B cell (primary cell): ENCODE measurements at regions of chr11 and their contacts with region 1.

Region 1: GRCh38 chr11:66677599-66678375 is at the start of gene RBM4B:
- DNase-seq: peak; percentile 99
- ATAC-seq: peak; percentile 91
- H3K4me3 ChIP-seq: peak within 1 kb of the TSS; percentile 86 to 95 (median 89)
- H3K4me3 Mint-ChIP-seq: peak within 1 kb of the TSS; percentile 99
- H3K27ac ChIP-seq: peak within 1 kb of the TSS; percentile 91 to 99
- H3K27ac Mint-ChIP-seq: peak within 1 kb of the TSS; percentile 99
- H3K4me1 ChIP-seq: peaks cover 24 to 35% of the 10 kb centered on the region in 2 donors
- H3K4me1 Mint-ChIP-seq: peaks cover 33% of the 10 kb centered on the region
- H3K27me3 ChIP-seq: no peaks in the 10 kb centered on the region
- H3K27me3 Mint-ChIP-seq: no peaks in the 10 kb centered on the region
- CTCF ChIP-seq: no peak
- total RNA-seq, gene RBM4B: 61.3 and 66.4 TPM in 2 replicates

Region 2: DNA sequence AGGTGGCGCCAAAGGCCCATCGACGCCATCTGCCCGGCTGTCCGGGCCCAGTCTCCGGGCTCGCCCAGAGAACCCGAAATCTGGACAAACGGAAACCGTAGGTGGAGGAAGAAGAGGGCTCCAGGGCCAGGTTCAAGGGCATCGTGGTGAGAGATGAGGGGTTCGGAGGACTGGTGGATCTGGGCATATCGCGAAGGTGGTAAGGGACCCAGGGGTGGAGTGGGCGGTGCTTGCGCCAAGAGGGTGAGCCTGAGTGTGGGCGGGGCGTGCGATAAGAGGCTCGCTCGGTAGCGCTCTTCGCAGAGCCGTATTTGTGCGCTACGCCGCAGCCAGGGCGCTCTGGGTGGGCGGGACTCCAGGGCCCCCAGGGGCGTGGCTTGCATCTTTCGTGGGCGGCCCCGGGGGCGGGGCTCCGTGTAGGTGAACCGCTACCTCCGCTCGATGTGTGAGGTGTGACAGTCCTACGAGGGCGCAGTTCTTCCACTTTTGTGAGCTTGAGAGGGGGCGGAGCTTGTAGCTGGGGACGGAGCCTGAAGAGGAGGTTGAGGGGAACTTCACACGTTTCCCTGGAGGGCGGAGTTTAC is 365.7 kb before region 1 on chr11:
- CTCF ChIA-PET with region 1: interaction called, 5 read pairs
- POLR2A ChIA-PET with region 1: no interaction called
- intact Hi-C with region 1: loop called (anchors 2 kb)
- DNase-seq: peak; percentile 100
- ATAC-seq: peak; percentile 79
- H3K4me3 ChIP-seq: peak overlapping the region; percentile 30 to 72 (median 63)
- H3K4me3 Mint-ChIP-seq: peak overlapping the region; percentile 99
- H3K27ac ChIP-seq: peak overlapping the region; percentile 74 to 88
- H3K27ac Mint-ChIP-seq: peak overlapping the region; percentile 99
- H3K4me1 ChIP-seq: peaks cover 11 to 21% of the 10 kb centered on the region in 2 donors
- H3K4me1 Mint-ChIP-seq: peaks cover 28% of the 10 kb centered on the region
- H3K27me3 ChIP-seq: no peaks in the 10 kb centered on the region
- H3K27me3 Mint-ChIP-seq: peaks cover 3% of the 10 kb centered on the region
- CTCF ChIP-seq: peak; percentile 99

Region 3: GRCh38 chr11:66438504-66439466 is 239.0 kb before region 1 on chr11 and contains the start of gene MRPL11:
- CTCF ChIA-PET with region 1: interaction called, 32 read pairs
- POLR2A ChIA-PET with region 1: interaction called, 5 read pairs
- intact Hi-C with region 1: loop called (anchors 1 kb)
- DNase-seq: peak; percentile 95
- ATAC-seq: peak; percentile 98
- H3K4me3 ChIP-seq: peak within 1 kb of the TSS; percentile 71 to 98 (median 78)
- H3K4me3 Mint-ChIP-seq: peak within 1 kb of the TSS; percentile 93
- H3K27ac ChIP-seq: peak within 1 kb of the TSS; percentile 76 to 79
- H3K27ac Mint-ChIP-seq: peak within 1 kb of the TSS; percentile 98
- H3K4me1 ChIP-seq: peaks cover 6 to 10% of the 10 kb centered on the region in 2 donors
- H3K4me1 Mint-ChIP-seq: peaks cover 14% of the 10 kb centered on the region
- H3K27me3 ChIP-seq: no peaks in the 10 kb centered on the region
- H3K27me3 Mint-ChIP-seq: no peaks in the 10 kb centered on the region
- CTCF ChIP-seq: peak; percentile 77
- total RNA-seq, gene MRPL11: 26.7 and 29.2 TPM in 2 replicates

Region 4: GRCh38 chr11:66545701-66546367 is 132.0 kb before region 1 on chr11 and contains the start of gene ZDHHC24:
- CTCF ChIA-PET with region 1: interaction called, 58 read pairs
- POLR2A ChIA-PET with region 1: interaction called, 17 read pairs
- intact Hi-C with region 1: loop called (anchors 1 kb)
- DNase-seq: peak; percentile 91
- ATAC-seq: peak; percentile 82
- H3K4me3 ChIP-seq: peak within 1 kb of the TSS; percentile 74 to 89 (median 83)
- H3K4me3 Mint-ChIP-seq: peak within 1 kb of the TSS; percentile 95
- H3K27ac ChIP-seq: peak within 1 kb of the TSS; percentile 62 to 91
- H3K27ac Mint-ChIP-seq: peak within 1 kb of the TSS; percentile 89
- H3K4me1 ChIP-seq: peaks cover 26 to 34% of the 10 kb centered on the region in 2 donors
- H3K4me1 Mint-ChIP-seq: peaks cover 42% of the 10 kb centered on the region
- H3K27me3 ChIP-seq: no peaks in the 10 kb centered on the region
- H3K27me3 Mint-ChIP-seq: no peaks in the 10 kb centered on the region
- CTCF ChIP-seq: no peak
- total RNA-seq, gene ZDHHC24: 32.6 and 33.2 TPM in 2 replicates

Region 5: GRCh38 chr11:66607126-66607834 is 70.5 kb before region 1 on chr11:
- CTCF ChIA-PET with region 1: interaction called, 15 read pairs
- POLR2A ChIA-PET with region 1: interaction called, 10 read pairs
- intact Hi-C with region 1: no loop called
- DNase-seq: no peak
- ATAC-seq: no peak
- H3K4me3 ChIP-seq: no peak overlapping the region
- H3K4me3 Mint-ChIP-seq: no peak overlapping the region
- H3K27ac ChIP-seq: peak overlapping the region; percentile 9 to 56
- H3K27ac Mint-ChIP-seq: peak overlapping the region; percentile 76
- H3K4me1 ChIP-seq: peaks cover 41 to 56% of the 10 kb centered on the region in 2 donors
- H3K4me1 Mint-ChIP-seq: peaks cover 41% of the 10 kb centered on the region
- H3K27me3 ChIP-seq: no peaks in the 10 kb centered on the region
- H3K27me3 Mint-ChIP-seq: no peaks in the 10 kb centered on the region
- CTCF ChIP-seq: no peak

Region 6: GRCh38 chr11:66659763-66660162 is 18.0 kb before region 1 on chr11:
- CTCF ChIA-PET with region 1: interaction called, 10 read pairs
- POLR2A ChIA-PET with region 1: interaction called, 5 read pairs
- intact Hi-C with region 1: loop called (anchors 2 kb)
- DNase-seq: peak; percentile 62
- ATAC-seq: no peak
- H3K4me3 ChIP-seq: peak overlapping the region in 1 of 5 experiments; percentile 36
- H3K4me3 Mint-ChIP-seq: peak overlapping the region; percentile 78
- H3K27ac ChIP-seq: peak overlapping the region; percentile 65 to 69
- H3K27ac Mint-ChIP-seq: peak overlapping the region; percentile 87
- H3K4me1 ChIP-seq: peaks cover 30 to 34% of the 10 kb centered on the region in 2 donors
- H3K4me1 Mint-ChIP-seq: peaks cover 29% of the 10 kb centered on the region
- H3K27me3 ChIP-seq: no peaks in the 10 kb centered on the region
- H3K27me3 Mint-ChIP-seq: no peaks in the 10 kb centered on the region
- CTCF ChIP-seq: no peak

Region 7: DNA sequence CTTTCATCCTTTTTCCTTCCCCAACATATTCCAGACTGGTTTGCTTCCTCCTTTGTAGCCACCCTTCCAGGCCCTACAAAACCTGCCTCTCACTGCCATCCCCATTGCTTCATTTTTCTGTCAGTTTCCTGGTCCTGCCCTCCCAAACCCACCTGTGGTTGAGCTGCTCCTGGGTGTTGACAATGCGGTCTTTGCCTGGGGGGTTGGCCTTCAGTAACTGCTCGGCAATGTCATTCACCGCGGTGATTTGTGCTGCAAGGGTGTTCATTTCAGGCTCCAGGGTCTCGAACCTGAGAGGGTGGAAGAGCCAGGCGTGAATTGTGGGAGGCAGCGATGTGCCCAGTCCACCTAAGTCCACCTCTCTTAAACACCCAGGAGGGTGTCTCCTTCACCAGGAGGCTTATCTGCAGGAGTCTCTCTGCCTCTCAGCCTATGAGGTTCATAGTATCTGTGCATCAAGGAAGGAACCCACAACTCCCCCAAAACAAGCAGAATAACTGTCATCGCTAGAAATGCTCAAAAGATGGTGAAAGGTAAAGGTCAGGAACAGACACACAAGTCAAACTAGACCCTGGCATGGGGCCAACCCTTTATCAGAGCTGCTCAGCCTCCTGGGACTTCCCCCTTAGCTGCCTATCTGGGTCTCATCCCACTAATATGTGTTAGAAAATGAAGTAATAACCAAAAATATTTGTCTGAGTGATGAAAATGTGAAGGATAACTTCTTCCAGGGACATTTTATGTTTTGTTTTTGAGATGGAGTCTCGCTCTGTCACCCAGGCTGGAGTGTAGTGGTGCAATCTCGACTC is 23.8 kb after region 1 on chr11:
- CTCF ChIA-PET with region 1: no interaction called
- POLR2A ChIA-PET with region 1: no interaction called
- intact Hi-C with region 1: no loop called
- DNase-seq: no peak
- ATAC-seq: no peak
- H3K4me3 ChIP-seq: no peak overlapping the region
- H3K4me3 Mint-ChIP-seq: no peak overlapping the region
- H3K27ac ChIP-seq: no peak overlapping the region
- H3K27ac Mint-ChIP-seq: no peak overlapping the region
- H3K4me1 ChIP-seq: no peaks in the 10 kb centered on the region
- H3K4me1 Mint-ChIP-seq: no peaks in the 10 kb centered on the region
- H3K27me3 ChIP-seq: no peaks in the 10 kb centered on the region
- H3K27me3 Mint-ChIP-seq: no peaks in the 10 kb centered on the region
- CTCF ChIP-seq: no peak

Region 8: DNA sequence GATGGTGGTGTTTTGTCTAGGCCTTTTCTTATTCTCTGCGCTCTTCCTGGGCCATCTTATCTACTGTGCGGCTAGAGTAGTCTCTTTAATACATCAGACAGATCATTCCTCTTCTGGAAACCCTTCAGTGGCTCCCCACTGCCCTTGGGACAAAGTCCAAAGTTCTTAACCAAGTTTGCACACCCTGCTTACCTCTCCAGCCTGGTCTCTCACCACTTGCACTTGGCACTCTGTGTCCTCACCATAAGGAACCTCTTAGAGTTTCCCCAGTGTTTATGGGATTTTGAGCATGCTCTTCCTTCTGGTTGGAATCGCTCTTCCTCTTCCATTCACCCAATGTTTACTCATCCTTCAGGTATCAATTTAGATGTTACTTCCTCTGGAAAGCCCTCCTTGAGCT is 56.4 kb after region 1 on chr11:
- CTCF ChIA-PET with region 1: no interaction called
- POLR2A ChIA-PET with region 1: no interaction called
- intact Hi-C with region 1: no loop called
- DNase-seq: no peak
- ATAC-seq: no peak
- H3K4me3 ChIP-seq: no peak overlapping the region
- H3K4me3 Mint-ChIP-seq: no peak overlapping the region
- H3K27ac ChIP-seq: no peak overlapping the region
- H3K27ac Mint-ChIP-seq: no peak overlapping the region
- H3K4me1 ChIP-seq: no peaks in the 10 kb centered on the region
- H3K4me1 Mint-ChIP-seq: no peaks in the 10 kb centered on the region
- H3K27me3 ChIP-seq: peaks cover 0 to 7% (median 4%) of the 10 kb centered on the region in 4 experiments
- H3K27me3 Mint-ChIP-seq: peaks cover 32% of the 10 kb centered on the region
- CTCF ChIP-seq: no peak

Region 9: GRCh38 chr11:67347964-67348749 is 670.4 kb after region 1 on chr11:
- CTCF ChIA-PET with region 1: no interaction called
- POLR2A ChIA-PET with region 1: no interaction called
- intact Hi-C with region 1: no loop called
- DNase-seq: no peak
- ATAC-seq: no peak
- H3K4me3 ChIP-seq: no peak overlapping the region
- H3K4me3 Mint-ChIP-seq: no peak overlapping the region
- H3K27ac ChIP-seq: peak overlapping the region in 1 of 2 donors; percentile 65
- H3K27ac Mint-ChIP-seq: peak overlapping the region; percentile 84
- H3K4me1 ChIP-seq: peaks cover 73 to 92% of the 10 kb centered on the region in 2 donors
- H3K4me1 Mint-ChIP-seq: peaks cover 74% of the 10 kb centered on the region
- H3K27me3 ChIP-seq: no peaks in the 10 kb centered on the region
- H3K27me3 Mint-ChIP-seq: no peaks in the 10 kb centered on the region
- CTCF ChIP-seq: no peak